SK-N-SH (cell line): ENCODE measurements at regions of chr17 and their contacts with region 1.

Region 1: DNA sequence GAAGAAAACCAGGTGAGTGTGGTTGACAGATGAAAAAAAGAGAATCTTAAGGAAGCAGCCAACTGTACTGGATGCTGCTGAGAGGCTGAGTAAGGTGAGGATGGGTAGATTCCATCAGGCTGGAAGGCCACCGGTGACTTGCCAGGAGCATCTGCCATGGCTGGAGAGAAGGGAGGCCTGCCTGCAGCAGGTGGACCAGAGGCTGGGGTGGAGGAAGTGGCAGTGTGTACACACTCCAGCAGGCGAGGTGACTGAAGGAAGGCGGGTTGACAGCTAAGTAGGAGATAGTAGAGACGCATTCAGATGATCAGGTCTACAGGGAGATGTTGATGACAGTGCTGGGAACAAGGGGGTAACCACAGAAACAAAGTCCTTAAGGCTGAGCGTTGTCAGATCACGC is 69.5 kb downstream of the USP43 start:
- DNase-seq: no peak
- H3K4me3 ChIP-seq: no peak overlapping the region
- H3K27ac ChIP-seq: no peak overlapping the region
- H3K4me1 ChIP-seq: no peaks in the 10 kb centered on the region
- H3K27me3 ChIP-seq: peaks cover 38% of the 10 kb centered on the region; the same call in 1 of the 2 replicates
- CTCF ChIP-seq: no peak
- EP300 ChIP-seq: no peak
- RAD21 ChIP-seq: no peak

Region 2: DNA sequence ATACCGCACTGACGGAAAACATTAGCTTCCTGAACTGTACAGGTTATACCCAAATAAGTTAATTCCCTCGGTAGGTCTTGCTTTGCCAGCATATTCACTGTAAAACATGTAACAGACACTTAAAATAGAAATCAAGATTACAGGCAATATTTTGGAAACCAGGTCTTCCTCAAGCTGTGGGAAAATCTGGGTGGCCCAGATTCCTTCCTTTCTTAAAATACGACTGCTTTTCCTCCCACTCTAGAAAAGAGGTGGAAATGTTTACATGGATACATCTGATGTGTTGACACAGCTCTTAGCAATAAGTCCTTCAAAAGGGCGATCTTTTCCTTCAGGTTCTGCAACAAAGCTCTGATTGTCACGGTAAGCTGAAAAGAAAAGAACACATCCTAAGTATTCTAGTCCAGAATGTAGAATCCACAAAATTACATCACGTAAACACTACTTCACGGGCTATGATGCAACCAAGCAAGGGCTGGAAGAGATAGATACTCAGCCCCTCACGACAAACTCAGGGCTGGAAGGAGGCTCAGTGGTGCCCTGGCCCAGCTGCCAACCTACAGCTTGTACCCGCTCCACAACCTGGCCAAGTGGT is 157.5 kb before region 1 on chr17:
- CTCF ChIA-PET with region 1: no interaction called
- POLR2A ChIA-PET with region 1: no interaction called
- DNase-seq: no peak
- H3K4me3 ChIP-seq: no peak overlapping the region
- H3K27ac ChIP-seq: no peak overlapping the region
- H3K4me1 ChIP-seq: no peaks in the 10 kb centered on the region
- H3K27me3 ChIP-seq: no peaks in the 10 kb centered on the region
- CTCF ChIP-seq: no peak
- EP300 ChIP-seq: no peak
- RAD21 ChIP-seq: no peak

Region 3: GRCh38 chr17:9615486-9615885 is 99.3 kb before region 1 on chr17:
- CTCF ChIA-PET with region 1: no interaction called
- POLR2A ChIA-PET with region 1: no interaction called
- DNase-seq: no peak
- H3K4me3 ChIP-seq: no peak overlapping the region
- H3K27ac ChIP-seq: no peak overlapping the region
- H3K4me1 ChIP-seq: no peaks in the 10 kb centered on the region
- H3K27me3 ChIP-seq: no peaks in the 10 kb centered on the region
- CTCF ChIP-seq: no peak
- EP300 ChIP-seq: no peak
- RAD21 ChIP-seq: no peak

Region 4: DNA sequence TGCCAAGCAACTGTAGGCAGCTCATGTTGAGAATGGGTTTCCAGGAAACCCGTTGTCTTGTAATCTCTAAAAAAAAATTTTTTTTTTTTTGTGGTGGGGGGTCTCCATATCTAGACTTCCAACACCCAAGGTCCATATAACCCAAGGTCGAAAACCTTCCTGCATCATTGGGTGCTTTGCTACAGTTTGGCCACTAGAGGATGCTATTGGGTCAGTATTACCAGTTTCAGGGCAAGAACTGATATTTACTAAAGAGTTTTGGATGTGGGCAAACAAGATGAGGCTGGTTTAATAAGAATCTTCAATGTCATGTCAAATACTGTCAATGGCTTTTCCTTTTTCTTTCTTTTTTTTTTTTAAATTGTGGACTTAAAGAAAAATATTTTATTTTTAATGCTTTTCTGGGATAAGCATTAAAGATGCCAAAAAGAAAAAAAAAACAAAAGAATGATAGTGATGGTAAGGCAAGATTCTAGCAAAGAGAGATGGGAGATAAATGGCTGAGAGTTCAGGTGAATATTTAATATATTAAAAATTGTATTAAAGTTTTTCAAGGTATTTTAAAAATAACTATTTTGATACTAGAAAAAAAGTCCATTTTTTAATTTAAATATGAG is 14.3 kb after region 1 on chr17:
- CTCF ChIA-PET with region 1: interaction called, 12 read pairs
- POLR2A ChIA-PET with region 1: no interaction called
- DNase-seq: peak; percentile 63
- H3K4me3 ChIP-seq: peak overlapping the region in 1 of 2 experiments; percentile 41; a peak in 1 of 4 replicates
- H3K27ac ChIP-seq: no peak overlapping the region
- H3K4me1 ChIP-seq: no peaks in the 10 kb centered on the region
- H3K27me3 ChIP-seq: peaks cover 48% of the 10 kb centered on the region
- CTCF ChIP-seq: peak; percentile 99
- EP300 ChIP-seq: no peak
- RAD21 ChIP-seq: peak; percentile 77